Calu3 (cell line): ENCODE measurements at regions of chr5 and their contacts with region 1.

Region 1: DNA sequence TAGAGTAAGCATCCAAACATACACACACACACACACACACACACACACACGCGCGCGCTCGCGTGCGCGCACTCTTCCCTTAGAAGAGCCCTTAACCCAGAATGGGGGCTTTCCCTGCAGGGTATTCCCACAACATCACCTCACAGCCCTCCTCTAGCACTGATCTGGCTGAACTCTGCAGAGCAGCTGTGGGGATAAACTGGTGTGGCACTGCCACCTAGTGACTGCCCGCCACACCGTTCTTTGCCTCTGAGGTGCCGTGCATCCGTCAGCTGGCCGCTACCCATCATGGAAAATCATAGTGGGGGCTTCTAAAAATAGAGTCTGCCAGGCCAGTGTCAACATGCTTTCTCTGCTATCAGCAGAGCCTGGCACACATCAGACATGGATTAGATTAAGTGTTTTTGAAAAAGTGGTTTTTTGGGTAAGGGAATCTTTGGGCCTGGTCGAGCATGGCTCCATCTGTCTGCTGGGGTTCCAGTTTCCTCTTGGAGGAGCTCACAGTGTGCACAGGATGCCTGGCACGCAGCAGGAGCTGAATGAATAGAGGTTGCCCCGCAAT is 88.1 kb downstream of the KCNN2 start:
- DNase-seq: peak; percentile 78
- H3K4me3 Mint-ChIP-seq: no peak overlapping the region
- H3K27ac Mint-ChIP-seq: no peak overlapping the region
- H3K4me1 Mint-ChIP-seq: no peaks in the 10 kb centered on the region
- H3K27me3 Mint-ChIP-seq: peaks cover 56% of the 10 kb centered on the region
- CTCF ChIP-seq: peak; percentile 82

Region 2: DNA sequence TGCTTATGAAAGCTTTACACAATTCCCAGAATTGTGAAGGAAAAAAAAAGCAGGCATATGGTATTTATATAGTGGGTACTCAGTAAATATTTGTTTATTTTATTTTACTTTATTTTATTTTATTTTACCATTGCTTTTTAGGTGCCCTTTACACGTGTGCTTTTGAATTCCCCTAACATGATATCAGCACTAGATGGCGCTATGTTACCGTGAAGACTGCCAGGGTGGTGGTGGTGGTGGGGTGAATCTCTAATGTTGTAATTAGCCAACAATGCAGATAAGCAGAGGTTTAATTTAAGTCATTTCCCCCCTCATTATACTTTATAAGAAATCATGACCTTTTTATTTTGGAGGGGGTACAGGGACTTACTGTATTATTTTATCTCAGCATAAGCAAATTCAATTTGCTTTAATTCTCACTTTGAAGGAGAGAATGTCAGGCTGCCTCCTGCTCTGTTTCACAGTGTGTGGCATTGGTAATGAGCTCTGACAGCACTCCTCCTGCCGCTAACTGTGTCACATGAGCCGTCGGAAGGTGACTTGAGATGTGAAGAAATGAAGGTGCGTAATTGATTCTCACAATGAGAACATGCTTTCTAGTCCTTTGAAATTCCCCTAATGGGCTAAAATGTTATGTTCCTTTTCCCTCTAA is 770.9 kb before region 1 on chr5:
- CTCF ChIA-PET with region 1: interaction called, 6 read pairs
- intact Hi-C with region 1: loop called (anchors 1 kb)
- DNase-seq: peak; percentile 61
- H3K4me3 Mint-ChIP-seq: no peak overlapping the region
- H3K27ac Mint-ChIP-seq: no peak overlapping the region
- H3K4me1 Mint-ChIP-seq: no peaks in the 10 kb centered on the region
- H3K27me3 Mint-ChIP-seq: peaks cover 27% of the 10 kb centered on the region
- CTCF ChIP-seq: peak; percentile 78

Region 3: DNA sequence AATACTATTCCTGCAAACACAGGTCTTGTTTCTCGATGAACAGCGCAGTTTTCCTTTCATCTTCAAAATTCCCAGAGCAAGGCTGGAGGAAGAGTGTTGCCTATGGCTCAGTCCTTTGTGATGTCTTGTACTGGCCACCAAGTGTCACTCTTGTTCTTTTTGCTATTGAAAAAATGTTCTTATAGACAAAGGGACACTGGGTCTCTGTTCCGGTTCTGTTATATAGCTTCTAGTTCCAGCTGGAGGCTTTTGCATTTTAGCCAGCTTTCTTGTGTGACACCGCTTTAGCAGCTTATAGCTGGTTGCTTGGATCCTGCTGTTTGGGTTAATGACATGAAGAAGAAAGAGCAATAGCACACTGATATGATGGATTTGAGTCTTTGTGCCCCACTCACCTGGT is 431.8 kb before region 1 on chr5:
- CTCF ChIA-PET with region 1: interaction called, 3 read pairs
- intact Hi-C with region 1: loop called (anchors 1 kb)
- DNase-seq: no peak
- H3K4me3 Mint-ChIP-seq: no peak overlapping the region
- H3K27ac Mint-ChIP-seq: no peak overlapping the region
- H3K4me1 Mint-ChIP-seq: no peaks in the 10 kb centered on the region
- H3K27me3 Mint-ChIP-seq: no peaks in the 10 kb centered on the region
- CTCF ChIP-seq: peak; percentile 17

Region 4: GRCh38 chr5:114361724-114362196 is 88.2 kb before region 1 on chr5 and contains the start of gene KCNN2:
- CTCF ChIA-PET with region 1: interaction called, 16 read pairs
- intact Hi-C with region 1: loop called (anchors 1 kb)
- DNase-seq: peak; percentile 86
- H3K4me3 Mint-ChIP-seq: peak within 1 kb of the TSS; percentile 99
- H3K27ac Mint-ChIP-seq: peak within 1 kb of the TSS; percentile 87
- H3K4me1 Mint-ChIP-seq: no peaks in the 10 kb centered on the region
- H3K27me3 Mint-ChIP-seq: peaks cover 35% of the 10 kb centered on the region
- CTCF ChIP-seq: no peak
- total RNA-seq, gene KCNN2: 1.2 and 2.0 TPM in 2 replicates